Posterior vena cava (tissue), 2 donors: ENCODE measurements at regions of chr2 and their contacts with region 1.

Region 1: GRCh38 chr2:101831351-101831865 is 133.9 kb downstream of the MAP4K4 start:
- DNase-seq: peak; percentile 87

Region 2: GRCh38 chr2:101341901-101342624 is 489.3 kb before region 1 on chr2:
- intact Hi-C with region 1: loop called in 1 of 2 experiments (anchors 10 kb)
- DNase-seq: peak; percentile 93

Region 3: GRCh38 chr2:101697124-101698013 is 134.0 kb before region 1 on chr2 and contains the start of gene MAP4K4:
- intact Hi-C with region 1: loop called in 1 of 2 experiments (anchors 5 kb)
- DNase-seq: peak; percentile 95
- total RNA-seq, gene MAP4K4: 53.5 to 75.8 TPM

Region 4: DNA sequence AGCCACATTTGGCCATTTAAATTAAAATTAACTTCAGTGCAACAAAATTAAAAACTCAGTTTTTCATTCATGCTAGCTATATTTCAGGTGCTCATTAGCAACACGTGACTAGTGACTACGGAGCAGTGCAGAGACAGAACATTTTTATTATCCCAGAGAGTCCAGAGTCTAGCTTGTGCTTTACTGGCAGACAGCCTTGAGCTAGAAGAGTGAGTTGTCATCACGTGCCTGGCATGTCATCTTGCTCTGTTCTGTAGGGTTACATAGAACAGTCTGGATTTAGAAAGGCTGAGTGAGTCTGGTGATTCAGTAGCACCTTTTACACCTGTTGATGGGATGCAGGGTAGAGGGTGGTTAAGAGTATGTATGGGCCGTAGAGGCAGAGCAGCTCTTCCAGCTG is 23.5 kb after region 1 on chr2:
- intact Hi-C with region 1: no loop called
- DNase-seq: no peak

Region 5: DNA sequence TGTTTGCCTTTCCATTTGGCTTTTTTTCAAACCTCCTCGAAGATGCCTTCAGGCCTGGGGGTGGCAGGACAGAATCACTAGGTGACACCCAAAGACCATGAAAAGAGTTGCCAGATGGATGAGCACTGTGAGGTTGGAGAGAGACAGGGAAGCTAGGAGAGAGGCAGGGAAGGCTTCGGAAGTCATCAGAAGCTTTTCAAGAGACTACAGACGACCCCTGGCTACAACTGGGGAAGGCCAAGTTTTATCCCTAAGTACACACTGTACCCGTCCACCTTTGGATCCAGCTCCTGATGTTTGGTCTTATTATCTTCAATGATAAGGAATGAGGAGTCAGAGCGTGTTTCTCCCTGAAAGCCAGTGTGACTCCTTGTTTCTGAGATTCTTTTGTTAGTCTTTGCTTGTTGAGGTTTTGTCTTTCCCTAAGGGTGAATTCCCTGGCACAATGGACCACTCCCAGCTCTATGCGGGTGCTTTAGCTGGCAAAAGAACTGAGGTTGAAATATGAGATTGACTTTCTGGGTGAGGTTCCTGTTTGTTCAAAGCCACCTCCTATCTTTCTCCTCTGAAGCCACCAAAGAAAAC is 754.5 kb after region 1 on chr2:
- intact Hi-C with region 1: no loop called
- DNase-seq: no peak